ENCODE measurements at regions of chr18 and their contacts with region 1.

Region 1: GRCh38 chr18:62249478-62250097 is 62.5 kb downstream of the RELCH start:
- DNase-seq: peak; percentile 65

Region 2: GRCh38 chr18:62186774-62187542 is 62.6 kb before region 1 on chr18 and contains the starts of genes PIGN and RELCH:
- intact Hi-C with region 1: loop called (anchors 10 kb)
- DNase-seq: peak; percentile 97
- total RNA-seq, gene PIGN: 18.6 to 23.7 TPM
- total RNA-seq, gene RELCH: 24.9 to 29.7 TPM